ENCODE measurements at regions of chr12 and their contacts with region 1.

Region 1: DNA sequence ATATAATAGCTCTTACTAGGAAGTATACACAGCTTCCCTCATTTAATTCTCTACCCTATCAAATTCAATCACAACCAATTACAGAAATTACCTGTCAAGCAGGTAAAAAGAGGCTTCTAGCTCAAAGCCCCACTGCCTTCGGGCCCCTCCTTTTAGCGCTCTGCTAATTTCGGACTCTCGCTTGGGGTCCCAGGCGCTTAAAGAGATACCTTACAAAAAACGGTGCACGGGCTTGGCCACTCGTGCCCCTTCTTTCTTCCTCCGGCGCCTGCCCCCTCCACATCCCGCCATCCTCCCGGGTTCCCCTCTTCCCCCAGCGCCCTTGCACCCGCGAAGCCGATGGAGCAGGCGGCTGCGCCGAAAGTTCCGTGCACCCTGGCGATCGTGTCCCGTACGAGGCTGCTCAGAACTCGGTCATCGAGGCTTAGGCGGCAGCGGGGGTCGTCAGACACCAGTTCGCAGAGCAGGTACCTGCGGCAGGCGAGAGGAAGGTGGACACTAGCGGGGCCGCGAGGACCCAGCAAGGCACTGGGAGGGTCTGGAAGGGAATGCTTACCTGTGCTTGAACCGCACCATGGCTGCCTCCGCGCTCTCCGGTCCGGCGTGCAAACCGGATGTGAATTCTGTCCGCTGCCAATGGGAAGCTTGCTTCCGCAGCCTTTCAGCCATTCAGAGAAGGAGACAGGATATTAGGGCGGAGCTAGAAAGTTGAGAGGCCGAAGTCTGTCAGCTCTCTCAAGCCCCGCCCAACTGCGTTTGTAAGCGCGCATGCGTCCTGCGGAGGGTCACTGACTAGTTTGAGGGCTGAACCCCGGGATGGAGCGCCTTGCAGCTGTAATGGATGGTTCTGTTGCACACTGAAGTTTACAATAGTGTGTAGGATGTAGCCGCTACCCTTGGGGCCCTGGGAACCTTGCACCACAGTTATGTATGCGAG is at the start of gene POP5:
- DNase-seq: peak; percentile 98
- H3K4me3 ChIP-seq: peak within 1 kb of the TSS; percentile 55 to 89 (median 82)
- H3K27ac ChIP-seq: peak within 1 kb of the TSS; percentile 67 to 80 (median 75)
- H3K4me1 ChIP-seq: peaks cover 0 to 38% (median 36%) of the 10 kb centered on the region in 4 donors
- H3K27me3 ChIP-seq: no peaks in the 10 kb centered on the region
- CTCF ChIP-seq: no peak
- EP300 ChIP-seq: no peak
- POLR2A ChIP-seq: peak; percentile 20 to 41
- total RNA-seq, gene POP5: 21.0 to 33.4 (median 25.2) TPM

Region 2: DNA sequence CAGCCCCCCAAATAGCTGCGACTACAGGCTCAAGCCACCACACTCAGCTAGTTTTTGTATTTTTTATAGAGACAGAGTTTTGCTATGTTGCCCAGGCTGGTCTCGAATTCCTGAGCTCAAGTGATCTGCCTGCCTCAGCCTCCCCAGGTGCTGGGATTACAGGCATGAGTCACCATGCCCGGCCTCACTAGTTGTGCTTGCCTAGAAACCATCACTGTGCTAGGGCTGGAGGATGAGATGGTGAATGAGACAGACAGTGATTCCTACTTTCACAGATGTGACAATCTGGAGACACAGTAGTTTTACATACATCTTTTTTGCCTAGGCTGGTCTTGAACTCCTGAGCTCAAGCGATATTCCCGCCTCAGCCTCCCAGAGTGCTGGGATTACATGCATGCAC is 204.6 kb before region 1 on chr12:
- intact Hi-C with region 1: no loop called
- DNase-seq: no peak
- H3K4me3 ChIP-seq: no peak overlapping the region
- H3K27ac ChIP-seq: no peak overlapping the region
- H3K4me1 ChIP-seq: no peaks in the 10 kb centered on the region
- H3K27me3 ChIP-seq: peaks cover 5 to 46% (median 18%) of the 10 kb centered on the region in 3 donors
- CTCF ChIP-seq: no peak
- EP300 ChIP-seq: no peak
- POLR2A ChIP-seq: no peak

Region 3: GRCh38 chr12:120495723-120496412 is 85.2 kb before region 1 on chr12 and contains the start of gene DYNLL1:
- intact Hi-C with region 1: loop called (anchors 5 kb)
- DNase-seq: peak; percentile 98
- H3K4me3 ChIP-seq: peak within 1 kb of the TSS; percentile 76 to 99 (median 86)
- H3K27ac ChIP-seq: peak within 1 kb of the TSS; percentile 86 to 96 (median 92)
- H3K4me1 ChIP-seq: peaks cover 0 to 30% (median 24%) of the 10 kb centered on the region in 4 donors
- H3K27me3 ChIP-seq: no peaks in the 10 kb centered on the region
- CTCF ChIP-seq: peak in 1 of 4 experiments; percentile 7
- EP300 ChIP-seq: peak in 1 of 4 donors; percentile 32
- POLR2A ChIP-seq: peak; percentile 84 to 86
- total RNA-seq, gene DYNLL1: 204 to 254 (median 235) TPM

Region 4: DNA sequence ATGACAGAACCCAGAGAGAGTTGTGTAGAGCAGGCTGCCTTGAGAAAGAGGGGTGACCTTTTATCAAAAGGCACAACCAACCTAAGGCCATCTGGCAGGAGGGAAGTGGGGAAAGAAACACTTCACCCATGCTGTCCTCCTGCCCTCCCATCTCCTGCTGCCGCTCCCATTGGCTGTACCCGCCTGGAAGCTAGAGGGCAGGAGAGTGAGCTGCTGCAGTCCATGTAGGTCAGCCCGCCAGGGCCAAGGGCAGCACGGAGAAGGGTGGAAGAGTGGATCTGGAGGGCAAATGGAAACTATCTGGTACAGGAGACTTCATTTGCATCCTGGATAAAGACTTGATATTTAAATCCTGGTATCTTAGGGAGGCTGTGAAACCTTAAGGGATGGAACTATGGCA is 47.9 kb after region 1 on chr12:
- intact Hi-C with region 1: no loop called
- DNase-seq: no peak
- H3K4me3 ChIP-seq: no peak overlapping the region
- H3K27ac ChIP-seq: no peak overlapping the region
- H3K4me1 ChIP-seq: no peaks in the 10 kb centered on the region
- H3K27me3 ChIP-seq: peaks cover 0 to 4% (median 0%) of the 10 kb centered on the region in 3 donors
- CTCF ChIP-seq: no peak
- EP300 ChIP-seq: no peak
- POLR2A ChIP-seq: no peak

Region 5: DNA sequence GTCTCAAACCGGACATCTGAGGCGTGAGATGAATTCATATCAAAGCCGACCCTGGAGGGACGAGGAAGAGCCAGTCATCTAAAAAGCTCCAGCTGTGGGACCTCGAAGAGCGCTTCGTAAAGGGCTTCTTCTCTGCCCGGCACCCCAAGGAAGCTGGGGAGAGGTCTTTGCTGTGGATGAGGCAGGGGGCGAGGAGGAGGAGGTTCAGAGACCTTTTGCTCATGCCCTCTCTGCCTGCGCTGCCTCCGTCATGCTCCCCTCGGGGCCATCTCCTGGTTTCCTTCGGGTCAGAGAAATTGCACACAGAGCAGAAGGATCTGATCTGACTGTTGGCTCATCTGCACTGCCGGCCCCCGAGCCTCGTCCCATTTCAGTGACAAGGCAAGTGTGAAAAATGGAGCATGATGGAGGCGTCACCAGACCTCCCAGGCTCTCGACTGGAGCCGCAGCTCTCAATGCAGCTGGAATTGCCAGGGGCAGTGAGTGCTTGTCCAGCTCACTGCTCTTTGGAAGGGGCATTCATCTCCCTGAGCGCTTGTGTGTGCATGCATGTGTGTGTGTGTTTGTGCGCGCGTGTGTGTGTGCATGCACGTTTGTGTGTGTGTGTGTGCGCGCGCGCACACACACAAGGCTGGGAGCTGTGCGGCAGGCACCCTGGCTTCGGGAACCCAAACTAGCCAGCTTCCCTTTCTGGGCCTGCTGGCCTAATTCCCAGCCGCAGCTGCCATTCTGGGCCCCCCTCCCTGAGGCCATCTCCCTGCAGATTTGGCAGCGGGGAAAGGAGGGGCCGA is 68.6 kb after region 1 on chr12:
- intact Hi-C with region 1: loop called (anchors 2 kb)
- DNase-seq: no peak
- H3K4me3 ChIP-seq: peak overlapping the region; percentile 19 to 45 (median 42)
- H3K27ac ChIP-seq: peak overlapping the region; percentile 68 to 81 (median 77)
- H3K4me1 ChIP-seq: peaks cover 0 to 54% (median 40%) of the 10 kb centered on the region in 4 donors
- H3K27me3 ChIP-seq: peaks cover 0 to 13% (median 10%) of the 10 kb centered on the region in 3 donors
- CTCF ChIP-seq: peak in 2 of 4 experiments; percentile 4 to 48
- EP300 ChIP-seq: no peak
- POLR2A ChIP-seq: no peak

Region 6: GRCh38 chr12:120710031-120710804 is 129.2 kb after region 1 on chr12 and contains the start of gene UNC119B:
- intact Hi-C with region 1: loop called (anchors 2 kb)
- DNase-seq: peak; percentile 73
- H3K4me3 ChIP-seq: peak within 1 kb of the TSS; percentile 68 to 97 (median 90)
- H3K27ac ChIP-seq: peak within 1 kb of the TSS; percentile 88 to 95 (median 92)
- H3K4me1 ChIP-seq: peaks cover 0 to 26% (median 20%) of the 10 kb centered on the region in 4 donors
- H3K27me3 ChIP-seq: no peaks in the 10 kb centered on the region
- CTCF ChIP-seq: no peak
- EP300 ChIP-seq: no peak
- POLR2A ChIP-seq: no peak
- total RNA-seq, gene UNC119B: 11.1 to 18.3 (median 18.1) TPM

Region 7: GRCh38 chr12:120971299-120972179 is 390.5 kb after region 1 on chr12:
- intact Hi-C with region 1: loop called (anchors 2 kb)
- DNase-seq: no peak
- H3K4me3 ChIP-seq: no peak overlapping the region
- H3K27ac ChIP-seq: no peak overlapping the region
- H3K4me1 ChIP-seq: no peaks in the 10 kb centered on the region
- H3K27me3 ChIP-seq: no peaks in the 10 kb centered on the region
- CTCF ChIP-seq: peak; percentile 36 to 72 (median 64)
- EP300 ChIP-seq: no peak
- POLR2A ChIP-seq: no peak

Region 8: GRCh38 chr12:121095544-121096198 is 514.6 kb after region 1 on chr12:
- intact Hi-C with region 1: loop called (anchors 2 kb)
- DNase-seq: peak; percentile 78
- H3K4me3 ChIP-seq: peak overlapping the region in 3 of 4 donors; percentile 29 to 33 (median 29)
- H3K27ac ChIP-seq: no peak overlapping the region
- H3K4me1 ChIP-seq: peaks cover 0 to 10% (median 9%) of the 10 kb centered on the region in 4 donors
- H3K27me3 ChIP-seq: peaks cover 0 to 14% (median 6%) of the 10 kb centered on the region in 3 donors
- CTCF ChIP-seq: peak in 3 of 4 experiments; percentile 48 to 85 (median 61)
- EP300 ChIP-seq: no peak
- POLR2A ChIP-seq: no peak

Region 9: GRCh38 chr12:121110211-121110940 is 529.3 kb after region 1 on chr12:
- intact Hi-C with region 1: loop called (anchors 5 kb)
- DNase-seq: peak; percentile 74
- H3K4me3 ChIP-seq: no peak overlapping the region
- H3K27ac ChIP-seq: no peak overlapping the region
- H3K4me1 ChIP-seq: no peaks in the 10 kb centered on the region
- H3K27me3 ChIP-seq: no peaks in the 10 kb centered on the region
- CTCF ChIP-seq: peak; percentile 64 to 92 (median 87)
- EP300 ChIP-seq: no peak
- POLR2A ChIP-seq: no peak

Measured in sigmoid colon (tissue), 7 donors.